PC-9 (cell line): ENCODE measurements at regions of chr19 and their contacts with region 1.

Region 1: GRCh38 chr19:17841810-17842662 is 5.7 kb downstream of the JAK3 start:
- DNase-seq: peak; percentile 91 to 96
- H3K4me3 ChIP-seq: peak overlapping the region; percentile 93
- H3K27ac ChIP-seq: peak overlapping the region; percentile 63
- H3K4me1 ChIP-seq: peaks cover 10% of the 10 kb centered on the region
- H3K27me3 ChIP-seq: no peaks in the 10 kb centered on the region
- CTCF ChIP-seq: no peak

Region 2: DNA sequence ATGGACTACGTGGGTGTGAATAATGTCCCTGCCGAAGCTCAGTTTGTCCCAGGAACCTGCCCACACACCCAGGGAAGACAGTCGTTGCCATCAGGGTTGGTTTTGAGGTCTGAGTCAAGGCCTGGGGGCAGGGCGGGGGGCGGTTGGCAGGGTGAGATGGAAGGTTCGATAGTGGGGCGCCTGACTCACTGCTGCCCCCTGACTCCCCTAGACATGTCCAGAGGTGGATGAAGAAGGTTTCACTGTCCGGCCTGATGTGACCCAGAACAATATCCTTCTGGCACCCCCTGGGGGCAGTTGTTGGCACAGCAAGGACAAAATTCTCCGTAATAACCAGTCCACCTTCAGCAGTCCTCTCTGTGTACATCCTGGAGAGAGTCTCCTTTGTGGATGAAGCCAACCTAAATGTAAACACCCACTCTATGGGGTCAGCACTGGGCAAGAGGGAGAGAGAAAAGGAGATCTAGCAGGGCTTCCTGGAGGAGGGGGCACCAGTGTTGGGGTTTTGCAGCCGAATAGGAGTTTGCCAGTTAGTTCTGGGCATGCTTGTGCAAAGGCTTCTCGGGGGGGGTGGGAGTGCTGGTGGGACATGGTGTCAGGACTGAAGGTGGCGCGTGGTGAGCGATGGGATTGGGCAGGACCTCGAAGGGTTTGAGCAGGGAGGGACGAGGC is 66.7 kb before region 1 on chr19:
- CTCF ChIA-PET with region 1: no interaction called
- POLR2A ChIA-PET with region 1: interaction called, 3 read pairs
- intact Hi-C with region 1: loop called (anchors 1 kb)
- DNase-seq: peak; percentile 57 to 70
- H3K4me3 ChIP-seq: no peak overlapping the region
- H3K27ac ChIP-seq: no peak overlapping the region
- H3K4me1 ChIP-seq: peaks cover 18% of the 10 kb centered on the region
- H3K27me3 ChIP-seq: no peaks in the 10 kb centered on the region
- CTCF ChIP-seq: peak; percentile 93

Region 3: GRCh38 chr19:17794731-17795536 is 47.1 kb before region 1 on chr19 and contains the start of gene B3GNT3:
- CTCF ChIA-PET with region 1: no interaction called
- POLR2A ChIA-PET with region 1: interaction called, 14 read pairs
- intact Hi-C with region 1: loop called (anchors 1 kb)
- DNase-seq: peak; percentile 85 to 91
- H3K4me3 ChIP-seq: peak within 1 kb of the TSS; percentile 83
- H3K27ac ChIP-seq: peak within 1 kb of the TSS; percentile 98
- H3K4me1 ChIP-seq: peaks cover 73% of the 10 kb centered on the region
- H3K27me3 ChIP-seq: no peaks in the 10 kb centered on the region
- CTCF ChIP-seq: no peak
- total RNA-seq, gene B3GNT3: 47.7 and 65.9 TPM in 2 replicates

Region 4: GRCh38 chr19:17830567-17831418 is 11.2 kb before region 1 on chr19:
- CTCF ChIA-PET with region 1: interaction called, 3 read pairs
- POLR2A ChIA-PET with region 1: interaction called, 7 read pairs
- intact Hi-C with region 1: loop called (anchors 1 kb)
- DNase-seq: peak; percentile 88 to 94
- H3K4me3 ChIP-seq: peak overlapping the region; percentile 67
- H3K27ac ChIP-seq: peak overlapping the region; percentile 62
- H3K4me1 ChIP-seq: peaks cover 8% of the 10 kb centered on the region
- H3K27me3 ChIP-seq: no peaks in the 10 kb centered on the region
- CTCF ChIP-seq: no peak